ENCODE measurements at regions of chr1 and their contacts with region 1.

Region 1: DNA sequence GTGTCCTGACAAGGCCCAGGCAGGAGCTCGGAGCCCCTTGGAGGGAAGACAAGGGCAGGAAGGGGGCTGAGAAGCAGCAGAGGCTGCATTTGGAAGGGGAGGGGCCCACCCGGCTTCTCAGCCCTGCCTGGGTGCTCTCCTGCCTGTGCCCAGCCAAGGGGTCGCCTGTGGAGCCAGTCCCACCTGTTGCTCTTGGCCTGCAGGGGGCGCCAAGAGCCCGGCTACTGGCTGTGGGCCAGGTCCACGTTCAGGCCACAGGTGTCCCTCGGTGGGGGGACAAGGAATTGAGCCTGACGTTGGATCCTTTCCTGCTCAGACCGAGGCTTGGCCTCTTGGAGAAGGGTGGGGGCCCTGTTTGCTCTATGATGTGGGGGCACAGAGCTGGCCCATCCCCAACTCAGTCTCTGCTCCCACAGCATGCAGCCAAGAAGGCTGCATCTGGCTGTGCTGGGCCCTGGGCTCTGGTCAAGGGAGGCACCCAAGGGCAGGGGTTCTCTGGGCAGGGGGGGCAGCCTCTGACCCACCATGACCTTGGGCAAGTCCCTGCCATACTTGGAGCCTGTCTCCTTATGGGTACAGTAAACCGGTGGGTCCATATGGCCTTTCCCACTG is 10.9 kb downstream of the WNT4 start:
- DNase-seq: peak; percentile 63
- ATAC-seq: peak; percentile 68
- H3K4me3 ChIP-seq: no peak overlapping the region
- H3K27ac ChIP-seq: no peak overlapping the region
- H3K4me1 ChIP-seq: peaks cover 20% of the 10 kb centered on the region
- H3K27me3 ChIP-seq: no peaks in the 10 kb centered on the region
- CTCF ChIP-seq: peak; percentile 93

Region 2: GRCh38 chr1:22150923-22151322 is 18.9 kb after region 1 on chr1:
- CTCF ChIA-PET with region 1: no interaction called
- POLR2A ChIA-PET with region 1: no interaction called
- intact Hi-C with region 1: no loop called
- DNase-seq: no peak
- ATAC-seq: no peak
- H3K4me3 ChIP-seq: no peak overlapping the region
- H3K27ac ChIP-seq: no peak overlapping the region
- H3K4me1 ChIP-seq: no peaks in the 10 kb centered on the region
- H3K27me3 ChIP-seq: no peaks in the 10 kb centered on the region
- CTCF ChIP-seq: no peak

Region 3: GRCh38 chr1:22264464-22265341 is 132.7 kb after region 1 on chr1:
- CTCF ChIA-PET with region 1: interaction called, 17 read pairs
- POLR2A ChIA-PET with region 1: no interaction called
- intact Hi-C with region 1: no loop called
- DNase-seq: no peak
- ATAC-seq: no peak
- H3K4me3 ChIP-seq: no peak overlapping the region
- H3K27ac ChIP-seq: no peak overlapping the region
- H3K4me1 ChIP-seq: peaks cover 10% of the 10 kb centered on the region
- H3K27me3 ChIP-seq: no peaks in the 10 kb centered on the region
- CTCF ChIP-seq: no peak

Region 4: GRCh38 chr1:22317226-22317919 is 185.4 kb after region 1 on chr1:
- CTCF ChIA-PET with region 1: no interaction called
- POLR2A ChIA-PET with region 1: no interaction called
- intact Hi-C with region 1: loop called (anchors 1 kb)
- DNase-seq: peak; percentile 44
- ATAC-seq: peak; percentile 58; the same call in 1 of the 2 replicates
- H3K4me3 ChIP-seq: no peak overlapping the region
- H3K27ac ChIP-seq: no peak overlapping the region
- H3K4me1 ChIP-seq: no peaks in the 10 kb centered on the region
- H3K27me3 ChIP-seq: no peaks in the 10 kb centered on the region
- CTCF ChIP-seq: peak; percentile 68

Measured in PC-3 (cell line).